CD4-positive, alpha-beta T cell (primary cell): ENCODE measurements at regions of chr6 and their contacts with region 1.

Region 1: DNA sequence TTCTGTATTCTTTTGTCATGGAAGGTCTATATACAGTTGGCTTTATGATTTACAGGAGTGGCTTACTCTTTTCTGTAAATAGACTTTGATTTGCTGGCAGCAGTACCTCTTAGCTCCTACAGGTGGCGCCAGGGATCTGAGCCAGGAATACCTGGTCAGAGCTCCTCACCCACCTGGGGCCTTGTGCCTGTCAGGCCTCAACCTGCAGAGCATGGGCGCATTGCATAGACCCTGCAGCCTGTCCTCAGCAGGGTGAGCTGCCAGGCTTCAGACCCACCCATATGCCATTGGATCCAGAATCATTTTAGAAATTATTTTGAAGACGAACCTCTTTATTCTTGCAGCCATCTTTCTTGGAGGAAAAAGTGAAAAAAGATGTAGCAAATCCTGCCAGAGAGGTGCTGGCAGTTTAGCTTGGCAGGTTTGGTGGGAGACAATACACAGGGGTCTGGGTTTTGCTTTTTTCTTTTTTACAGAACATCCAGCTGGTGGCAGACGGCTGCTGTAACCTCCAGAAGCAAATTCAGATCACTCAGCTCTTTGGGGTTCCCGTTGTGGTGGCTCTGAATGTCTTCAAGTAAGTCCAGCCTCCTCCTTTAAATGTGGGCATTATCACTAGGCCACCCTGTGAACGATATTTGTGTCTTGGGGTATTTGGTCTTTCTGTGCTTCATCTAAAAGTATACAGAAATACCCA is 149.1 kb downstream of the MTHFD1L start:
- DNase-seq: peak; percentile 32 to 79 (median 42)
- ATAC-seq: peak; percentile 60
- H3K4me3 ChIP-seq: no peak overlapping the region
- H3K4me3 Mint-ChIP-seq: peak overlapping the region; percentile 6
- H3K27ac ChIP-seq: no peak overlapping the region
- H3K27ac Mint-ChIP-seq: no peak overlapping the region
- H3K4me1 ChIP-seq: peaks cover 2% of the 10 kb centered on the region
- H3K4me1 Mint-ChIP-seq: peaks cover 4% of the 10 kb centered on the region
- H3K27me3 ChIP-seq: no peaks in the 10 kb centered on the region
- H3K27me3 Mint-ChIP-seq: no peaks in the 10 kb centered on the region
- CTCF ChIP-seq: peak; percentile 98

Region 2: GRCh38 chr6:150981095-150981494 is 33.5 kb before region 1 on chr6:
- CTCF ChIA-PET with region 1: no interaction called
- POLR2A ChIA-PET with region 1: no interaction called
- intact Hi-C with region 1: no loop called
- DNase-seq: peak in 1 of 14 experiments; percentile 19
- ATAC-seq: no peak
- H3K4me3 ChIP-seq: no peak overlapping the region
- H3K4me3 Mint-ChIP-seq: no peak overlapping the region
- H3K27ac ChIP-seq: no peak overlapping the region
- H3K27ac Mint-ChIP-seq: no peak overlapping the region
- H3K4me1 ChIP-seq: no peaks in the 10 kb centered on the region
- H3K4me1 Mint-ChIP-seq: no peaks in the 10 kb centered on the region
- H3K27me3 ChIP-seq: no peaks in the 10 kb centered on the region
- H3K27me3 Mint-ChIP-seq: no peaks in the 10 kb centered on the region
- CTCF ChIP-seq: no peak

Region 3: GRCh38 chr6:150992719-150993118 is 21.8 kb before region 1 on chr6:
- CTCF ChIA-PET with region 1: no interaction called
- POLR2A ChIA-PET with region 1: no interaction called
- intact Hi-C with region 1: no loop called
- DNase-seq: no peak
- ATAC-seq: no peak
- H3K4me3 ChIP-seq: no peak overlapping the region
- H3K4me3 Mint-ChIP-seq: no peak overlapping the region
- H3K27ac ChIP-seq: no peak overlapping the region
- H3K27ac Mint-ChIP-seq: no peak overlapping the region
- H3K4me1 ChIP-seq: no peaks in the 10 kb centered on the region
- H3K4me1 Mint-ChIP-seq: peaks cover 1% of the 10 kb centered on the region
- H3K27me3 ChIP-seq: no peaks in the 10 kb centered on the region
- H3K27me3 Mint-ChIP-seq: no peaks in the 10 kb centered on the region
- CTCF ChIP-seq: no peak

Region 4: GRCh38 chr6:151330134-151330696 is 315.7 kb after region 1 on chr6:
- CTCF ChIA-PET with region 1: interaction called, 29 read pairs
- POLR2A ChIA-PET with region 1: interaction called, 11 read pairs
- intact Hi-C with region 1: loop called in 1 of 2 experiments (anchors 1 kb)
- DNase-seq: no peak
- ATAC-seq: no peak
- H3K4me3 ChIP-seq: no peak overlapping the region
- H3K4me3 Mint-ChIP-seq: no peak overlapping the region
- H3K27ac ChIP-seq: no peak overlapping the region
- H3K27ac Mint-ChIP-seq: no peak overlapping the region
- H3K4me1 ChIP-seq: peaks cover 10% of the 10 kb centered on the region
- H3K4me1 Mint-ChIP-seq: peaks cover 15% of the 10 kb centered on the region
- H3K27me3 ChIP-seq: peaks cover 13 to 21% of the 10 kb centered on the region in 2 experiments
- H3K27me3 Mint-ChIP-seq: peaks cover 35% of the 10 kb centered on the region
- CTCF ChIP-seq: no peak